ENCODE measurements at regions of chr17 and their contacts with region 1.

Region 1: DNA sequence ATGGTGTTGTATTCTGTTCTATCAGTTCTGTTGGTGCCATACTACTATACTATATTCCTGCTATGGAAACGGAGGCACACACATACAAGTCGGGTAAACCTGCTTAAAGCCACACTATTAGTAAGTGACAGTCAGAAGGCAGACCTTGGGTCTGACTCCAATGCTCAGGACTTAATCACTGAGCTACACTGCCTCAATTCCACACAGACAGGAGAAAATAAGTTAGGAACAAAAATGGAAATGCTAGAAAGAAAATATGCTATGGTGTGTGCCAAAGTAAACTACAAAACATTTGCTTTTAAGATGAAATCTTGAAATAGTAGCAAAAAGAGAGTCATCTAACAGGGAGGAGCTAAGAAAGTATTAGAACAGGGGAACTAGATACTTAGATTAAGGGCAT is 48.1 kb downstream of the MYO1D start:
- DNase-seq: no peak
- ATAC-seq: peak in 4 of 8 donors; percentile 32 to 50 (median 34)
- H3K4me3 ChIP-seq: peak overlapping the region in 2 of 10 donors; percentile 25 to 32
- H3K27ac ChIP-seq: peak overlapping the region in 3 of 10 donors; percentile 39 to 61 (median 57)
- H3K4me1 ChIP-seq: peaks cover 0 to 28% (median 6%) of the 10 kb centered on the region in 9 donors
- H3K27me3 ChIP-seq: peaks cover 0 to under 1% (median 0%) of the 10 kb centered on the region in 7 donors
- CTCF ChIP-seq: no peak

Region 2: DNA sequence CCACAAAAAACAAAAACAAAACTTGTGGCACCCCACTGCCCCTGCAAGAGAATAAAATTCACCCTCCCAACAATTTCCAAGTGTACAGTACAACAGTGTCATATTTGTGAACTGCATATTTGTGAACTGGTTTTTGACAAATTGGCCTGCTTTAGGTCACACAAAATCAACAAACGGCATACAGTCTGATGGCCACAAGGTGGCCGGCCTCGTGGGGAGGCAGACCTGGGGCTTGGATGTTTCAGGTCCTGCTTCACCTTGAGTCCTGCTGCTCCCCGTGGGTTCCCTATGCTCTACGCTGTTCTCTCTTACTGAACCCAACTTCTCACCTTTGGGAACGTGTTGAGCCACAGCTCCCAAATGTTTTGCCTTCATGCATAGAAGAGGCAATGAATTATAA is 239.8 kb before region 1 on chr17:
- intact Hi-C with region 1: no loop called
- DNase-seq: no peak
- ATAC-seq: no peak
- H3K4me3 ChIP-seq: no peak overlapping the region
- H3K27ac ChIP-seq: no peak overlapping the region
- H3K4me1 ChIP-seq: peaks cover 0 to 13% (median 0%) of the 10 kb centered on the region in 9 donors
- H3K27me3 ChIP-seq: no peaks in the 10 kb centered on the region
- CTCF ChIP-seq: no peak

Region 3: DNA sequence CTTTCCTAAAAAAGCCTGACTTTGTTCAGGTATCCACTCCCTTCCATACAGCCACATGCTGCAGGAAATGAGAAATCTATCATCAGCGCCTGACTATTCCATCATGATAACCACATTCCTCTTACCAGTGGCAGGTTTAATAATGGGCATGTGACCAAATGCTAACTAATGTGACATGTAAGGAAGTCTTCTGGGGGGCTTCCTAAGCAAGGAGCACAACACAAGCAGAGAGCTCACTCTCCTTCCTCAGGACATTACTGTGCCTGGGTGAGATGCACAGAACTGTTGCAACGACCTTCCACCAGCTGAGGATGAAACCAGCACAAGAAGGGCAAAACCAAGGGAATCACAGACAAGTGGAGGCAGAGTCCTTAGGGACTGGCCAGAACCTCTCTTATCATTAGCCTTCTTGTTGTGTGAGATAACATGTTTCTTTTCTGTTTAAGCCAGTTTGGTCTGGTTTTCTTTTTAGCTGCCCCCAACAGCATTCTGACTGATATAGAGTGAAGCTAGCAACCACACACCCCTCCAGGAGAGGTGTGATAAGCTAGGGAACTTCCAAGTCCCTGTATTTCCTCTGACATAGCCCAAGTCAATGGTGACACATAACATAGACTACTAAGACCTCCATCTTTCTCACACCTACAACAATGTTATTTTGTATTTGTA is 31.2 kb after region 1 on chr17:
- intact Hi-C with region 1: loop called in 2 of 10 experiments (anchors 5 kb)
- DNase-seq: no peak
- ATAC-seq: no peak
- H3K4me3 ChIP-seq: no peak overlapping the region
- H3K27ac ChIP-seq: no peak overlapping the region
- H3K4me1 ChIP-seq: peaks cover 0 to 19% (median 0%) of the 10 kb centered on the region in 9 donors
- H3K27me3 ChIP-seq: no peaks in the 10 kb centered on the region
- CTCF ChIP-seq: no peak

Region 4: DNA sequence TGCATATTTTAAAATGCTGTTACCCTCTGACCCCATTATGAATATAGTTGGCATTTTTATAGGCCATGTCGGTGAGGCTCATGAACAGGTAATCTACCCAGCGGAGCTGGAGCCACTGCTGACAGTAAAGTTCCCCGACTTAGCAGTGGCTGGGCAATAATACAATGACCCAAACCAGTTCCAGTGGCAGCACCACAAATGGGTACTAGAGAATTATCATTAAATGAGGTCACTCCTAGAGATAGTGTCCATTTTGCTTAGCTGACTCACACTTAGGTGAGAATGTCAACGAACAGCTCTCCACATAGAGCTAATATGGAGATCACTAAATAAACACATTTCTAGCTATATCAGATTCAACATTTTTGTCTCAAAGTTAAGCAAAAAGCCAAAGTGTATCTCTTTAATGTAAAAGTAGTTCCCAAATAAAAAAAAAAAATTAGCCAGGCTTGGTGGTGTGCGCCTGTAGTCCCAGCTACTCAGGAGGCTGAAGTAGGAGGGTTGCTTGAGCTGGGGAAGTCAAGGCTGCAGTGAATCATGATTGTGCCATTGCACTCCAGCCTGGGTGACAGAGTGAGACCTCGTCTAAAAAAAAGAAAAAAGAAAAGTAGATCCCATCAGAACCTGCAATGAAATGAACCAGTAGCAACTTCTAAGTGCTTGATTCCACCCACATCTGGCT is 40.7 kb after region 1 on chr17:
- intact Hi-C with region 1: loop called in 2 of 10 experiments (anchors 5 kb)
- DNase-seq: no peak
- ATAC-seq: peak in 5 of 8 donors; percentile 29 to 75 (median 65)
- H3K4me3 ChIP-seq: no peak overlapping the region
- H3K27ac ChIP-seq: peak overlapping the region in 9 of 10 donors; percentile 2 to 75 (median 55)
- H3K4me1 ChIP-seq: peaks cover 8 to 48% (median 27%) of the 10 kb centered on the region in 9 donors
- H3K27me3 ChIP-seq: no peaks in the 10 kb centered on the region
- CTCF ChIP-seq: no peak

Region 5: DNA sequence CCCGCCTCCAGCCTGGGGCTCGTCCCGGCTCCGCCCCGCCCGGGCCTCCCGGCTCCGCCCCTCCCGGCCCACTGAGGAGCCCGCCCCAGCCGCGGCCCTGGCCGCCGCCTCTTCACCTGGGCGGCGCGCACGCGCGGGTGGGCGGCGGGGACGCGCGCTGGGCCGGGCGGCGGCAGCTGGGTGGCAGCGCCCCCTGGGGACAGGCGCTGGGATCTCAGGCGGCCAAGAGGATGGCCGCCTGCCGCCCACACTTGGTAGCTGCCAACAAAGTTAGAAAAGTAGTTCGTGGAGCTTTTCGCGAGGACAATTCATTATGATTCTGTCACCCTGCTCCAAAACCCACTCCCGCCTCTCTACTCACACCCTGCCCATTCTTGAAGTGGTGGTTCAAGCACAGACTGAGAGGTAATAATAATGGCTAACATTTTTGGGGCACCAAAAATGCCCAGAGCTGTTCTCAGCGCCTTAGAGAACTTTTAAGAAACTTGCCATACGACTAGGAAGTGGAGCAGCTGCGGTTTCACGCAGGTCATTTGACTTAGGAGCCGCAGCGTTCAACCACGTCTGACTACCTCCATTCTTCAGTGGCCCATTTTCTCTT is 48.4 kb after region 1 on chr17:
- intact Hi-C with region 1: loop called in 1 of 10 experiments (anchors 5 kb)
- DNase-seq: peak; percentile 84 to 93
- ATAC-seq: peak; percentile 98 to 100 (median 99)
- H3K4me3 ChIP-seq: peak overlapping the region in 9 of 10 donors; percentile 74 to 97 (median 85)
- H3K27ac ChIP-seq: peak overlapping the region; percentile 64 to 91 (median 84)
- H3K4me1 ChIP-seq: peaks cover 0 to 32% (median 16%) of the 10 kb centered on the region in 9 donors
- H3K27me3 ChIP-seq: peaks cover 0 to 13% (median 0%) of the 10 kb centered on the region in 7 donors
- CTCF ChIP-seq: peak; percentile 74 to 96 (median 85)

Measured in heart right ventricle (tissue), 16 donors.